B cell (primary cell): ENCODE measurements at regions of chr17 and their contacts with region 1.

Region 1: DNA sequence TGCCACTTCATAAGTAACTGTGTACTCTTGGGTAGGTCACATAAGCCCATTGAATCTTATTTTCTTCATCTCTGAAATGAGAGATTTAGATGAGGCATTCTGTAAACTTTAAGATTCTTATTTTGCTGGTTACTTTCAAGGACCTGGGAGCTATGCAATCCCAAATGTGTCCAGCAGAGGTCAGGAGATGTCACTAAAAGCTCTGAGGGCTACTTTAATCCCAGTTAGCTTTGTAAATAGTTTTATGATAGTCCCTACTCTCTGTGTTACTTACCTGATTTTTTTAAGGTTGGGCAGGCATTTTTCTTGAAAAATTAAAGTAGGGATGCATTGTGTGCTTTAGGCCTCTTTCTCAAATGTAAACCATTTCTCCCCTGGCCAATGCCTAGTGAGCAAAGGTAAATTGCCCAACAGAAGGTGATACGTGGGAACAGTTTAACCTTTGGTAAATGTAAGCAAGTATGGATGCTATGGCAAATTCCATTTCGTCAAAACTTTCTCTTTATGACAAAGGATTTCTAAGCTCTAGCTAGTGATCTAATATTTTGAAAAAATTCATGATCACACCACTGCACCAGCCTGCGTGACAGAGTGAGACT is 57.1 kb upstream of the WSB1 start:
- DNase-seq: peak; percentile 81
- ATAC-seq: peak; percentile 78
- H3K4me3 ChIP-seq: no peak overlapping the region
- H3K4me3 Mint-ChIP-seq: no peak overlapping the region
- H3K27ac ChIP-seq: no peak overlapping the region
- H3K27ac Mint-ChIP-seq: no peak overlapping the region
- H3K4me1 ChIP-seq: peaks cover 11 to 22% of the 10 kb centered on the region in 2 donors
- H3K4me1 Mint-ChIP-seq: peaks cover 34% of the 10 kb centered on the region
- H3K27me3 ChIP-seq: no peaks in the 10 kb centered on the region
- H3K27me3 Mint-ChIP-seq: no peaks in the 10 kb centered on the region
- CTCF ChIP-seq: peak; percentile 99

Region 2: GRCh38 chr17:27206447-27206846 is 30.4 kb before region 1 on chr17:
- CTCF ChIA-PET with region 1: interaction called, 30 read pairs
- POLR2A ChIA-PET with region 1: interaction called, 3 read pairs
- intact Hi-C with region 1: no loop called
- DNase-seq: peak; percentile 43
- ATAC-seq: peak; percentile 65
- H3K4me3 ChIP-seq: no peak overlapping the region
- H3K4me3 Mint-ChIP-seq: no peak overlapping the region
- H3K27ac ChIP-seq: no peak overlapping the region
- H3K27ac Mint-ChIP-seq: no peak overlapping the region
- H3K4me1 ChIP-seq: no peaks in the 10 kb centered on the region
- H3K4me1 Mint-ChIP-seq: peaks cover 5% of the 10 kb centered on the region
- H3K27me3 ChIP-seq: no peaks in the 10 kb centered on the region
- H3K27me3 Mint-ChIP-seq: no peaks in the 10 kb centered on the region
- CTCF ChIP-seq: peak; percentile 22

Region 3: DNA sequence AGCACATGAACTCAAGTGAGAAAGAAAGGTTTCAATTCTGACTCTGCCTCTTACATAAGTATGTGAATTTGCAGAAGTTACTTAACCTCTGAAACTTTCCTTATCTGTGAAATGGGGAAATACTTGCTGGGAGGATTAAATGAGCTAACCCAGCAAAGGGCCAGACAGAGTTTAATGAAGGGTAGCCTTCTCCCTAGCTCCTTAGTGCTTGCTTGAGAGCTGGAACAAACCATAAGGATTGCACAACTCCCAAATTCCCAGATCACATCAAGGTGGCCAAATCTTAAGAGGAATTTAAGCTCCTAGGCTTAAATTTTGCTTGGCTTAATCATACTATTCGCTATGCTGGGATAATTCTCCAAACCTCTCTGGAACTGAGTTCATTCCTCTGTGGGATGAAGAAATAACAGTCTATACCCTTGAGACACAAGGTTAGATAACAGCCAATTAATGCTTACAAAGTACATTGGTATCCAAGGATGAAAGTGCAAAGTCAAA is 45.3 kb after region 1 on chr17:
- CTCF ChIA-PET with region 1: interaction called, 20 read pairs
- POLR2A ChIA-PET with region 1: no interaction called
- intact Hi-C with region 1: no loop called
- DNase-seq: peak; percentile 68
- ATAC-seq: peak; percentile 78
- H3K4me3 ChIP-seq: peak overlapping the region in 2 of 5 experiments; percentile 0 to 42
- H3K4me3 Mint-ChIP-seq: peak overlapping the region; percentile 66
- H3K27ac ChIP-seq: peak overlapping the region; percentile 80 to 86
- H3K27ac Mint-ChIP-seq: peak overlapping the region; percentile 89
- H3K4me1 ChIP-seq: peaks cover 60 to 62% of the 10 kb centered on the region in 2 donors
- H3K4me1 Mint-ChIP-seq: peaks cover 57% of the 10 kb centered on the region
- H3K27me3 ChIP-seq: no peaks in the 10 kb centered on the region
- H3K27me3 Mint-ChIP-seq: no peaks in the 10 kb centered on the region
- CTCF ChIP-seq: no peak

Region 4: DNA sequence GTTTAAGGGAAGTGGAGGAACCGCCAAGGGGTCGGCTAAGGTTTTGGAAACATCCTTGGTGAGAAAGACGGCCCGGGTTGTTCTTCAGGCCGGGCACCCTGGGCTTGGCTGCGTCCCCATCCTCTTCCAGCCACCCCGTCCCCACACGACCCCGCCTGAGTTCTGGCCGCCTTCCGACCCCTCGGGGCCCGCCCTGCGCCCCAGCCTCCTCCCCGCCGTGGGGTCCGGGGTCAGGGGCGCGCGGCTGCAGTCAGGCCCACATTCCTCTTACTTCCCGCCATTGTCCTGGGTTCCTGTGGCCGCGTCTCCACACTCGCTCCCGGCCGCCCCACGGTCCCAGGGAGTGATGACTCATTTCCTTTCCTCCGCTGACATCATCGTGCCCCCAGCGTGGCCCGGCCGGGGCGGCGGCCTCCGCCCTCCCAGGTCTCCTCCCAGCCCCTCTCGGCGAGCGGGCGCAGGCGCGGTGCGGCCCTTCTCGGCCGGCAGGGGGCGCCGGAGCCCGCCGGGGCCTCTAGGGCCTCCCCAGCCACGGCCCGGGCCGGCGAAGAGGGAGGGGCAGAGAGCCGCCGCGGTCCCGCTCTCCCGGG is 116.7 kb after region 1 on chr17:
- CTCF ChIA-PET with region 1: interaction called, 19 read pairs
- POLR2A ChIA-PET with region 1: no interaction called
- intact Hi-C with region 1: loop called (anchors 1 kb)
- DNase-seq: peak; percentile 90
- ATAC-seq: peak; percentile 82
- H3K4me3 ChIP-seq: peak overlapping the region in 4 of 5 experiments; percentile 62 to 78 (median 72)
- H3K4me3 Mint-ChIP-seq: peak overlapping the region; percentile 73
- H3K27ac ChIP-seq: peak overlapping the region; percentile 60 to 89
- H3K27ac Mint-ChIP-seq: peak overlapping the region; percentile 91
- H3K4me1 ChIP-seq: peaks cover 13 to 19% of the 10 kb centered on the region in 2 donors
- H3K4me1 Mint-ChIP-seq: peaks cover 19% of the 10 kb centered on the region
- H3K27me3 ChIP-seq: no peaks in the 10 kb centered on the region
- H3K27me3 Mint-ChIP-seq: no peaks in the 10 kb centered on the region
- CTCF ChIP-seq: peak; percentile 90

Region 5: GRCh38 chr17:27455914-27456680 is 219.3 kb after region 1 on chr17 and contains the start of gene KSR1:
- CTCF ChIA-PET with region 1: interaction called, 6 read pairs
- POLR2A ChIA-PET with region 1: no interaction called
- intact Hi-C with region 1: loop called (anchors 5 kb)
- DNase-seq: peak; percentile 89
- ATAC-seq: peak; percentile 94
- H3K4me3 ChIP-seq: peak within 1 kb of the TSS; percentile 21 to 76 (median 66)
- H3K4me3 Mint-ChIP-seq: peak within 1 kb of the TSS; percentile 94
- H3K27ac ChIP-seq: peak within 1 kb of the TSS in 1 of 2 donors; percentile 62
- H3K27ac Mint-ChIP-seq: peak within 1 kb of the TSS; percentile 88
- H3K4me1 ChIP-seq: peaks cover 16 to 23% of the 10 kb centered on the region in 2 donors
- H3K4me1 Mint-ChIP-seq: peaks cover 21% of the 10 kb centered on the region
- H3K27me3 ChIP-seq: no peaks in the 10 kb centered on the region
- H3K27me3 Mint-ChIP-seq: no peaks in the 10 kb centered on the region
- CTCF ChIP-seq: peak; percentile 29
- total RNA-seq, gene KSR1: 78.1 and 85.6 TPM in 2 replicates